ENCODE measurements at regions of chr7 and their contacts with region 1.

Region 1: GRCh38 chr7:125074141-125074540 is 144.5 kb upstream of the POT1 start:
- DNase-seq: no peak
- H3K4me3 ChIP-seq: no peak overlapping the region
- CTCF ChIP-seq: no peak

Region 2: GRCh38 chr7:125061776-125062397 is 12.3 kb before region 1 on chr7:
- CTCF ChIA-PET with region 1: interaction called, 11 read pairs
- POLR2A ChIA-PET with region 1: no interaction called
- DNase-seq: no peak
- H3K4me3 ChIP-seq: no peak overlapping the region
- CTCF ChIP-seq: no peak